ENCODE measurements at regions of chr16 and their contacts with region 1.

Region 1: GRCh38 chr16:86072328-86073102 is 173.6 kb downstream of the IRF8 start:
- DNase-seq: peak in 1 of 2 experiments; percentile 80
- H3K4me3 ChIP-seq: no peak overlapping the region
- H3K27ac ChIP-seq: no peak overlapping the region
- H3K4me1 ChIP-seq: peaks cover 2 to 15% (median 5%) of the 10 kb centered on the region in 4 experiments; a peak in 6 of 7 replicates
- H3K27me3 ChIP-seq: peaks cover 0 to 2% (median 0%) of the 10 kb centered on the region in 4 experiments; a peak in 2 of 7 replicates
- CTCF ChIP-seq: peak; percentile 69 to 79 (median 70)
- EP300 ChIP-seq: no peak
- POLR2A ChIP-seq: no peak
- RAD21 ChIP-seq: peak; percentile 79 to 83

Region 2: DNA sequence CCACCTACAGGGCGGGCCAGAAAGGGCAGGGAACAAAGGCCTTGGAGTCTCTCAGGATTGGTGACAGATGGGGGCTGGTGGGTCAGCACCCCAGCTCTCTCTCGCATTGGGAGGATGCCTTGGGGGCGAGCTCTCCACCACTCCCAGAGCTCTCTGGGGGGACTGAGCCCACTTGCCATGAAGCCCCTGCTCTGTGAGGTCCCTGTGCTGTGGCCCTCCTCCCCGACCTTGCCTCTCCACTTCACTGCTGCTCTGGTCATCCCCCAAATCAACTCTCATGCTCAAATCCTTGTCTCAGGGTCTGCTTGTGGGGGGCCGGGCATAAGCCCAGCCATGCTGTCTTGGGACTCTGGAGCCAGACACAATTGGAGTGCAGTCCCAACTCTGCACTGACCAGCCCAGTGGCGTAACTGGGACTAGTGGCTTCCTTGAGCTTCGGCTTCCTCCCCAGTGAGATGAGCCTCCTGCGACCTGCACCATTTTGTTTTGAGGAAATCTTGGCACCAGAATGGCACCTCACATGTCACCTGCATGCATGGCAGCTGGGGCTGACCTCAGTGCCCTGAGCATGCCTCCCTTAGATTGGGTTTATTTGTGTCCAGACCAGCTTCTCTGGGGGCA is 11.0 kb after region 1 on chr16:
- CTCF ChIA-PET with region 1: interaction called, 11 read pairs
- POLR2A ChIA-PET with region 1: interaction called, 3 read pairs
- DNase-seq: no peak
- H3K4me3 ChIP-seq: no peak overlapping the region
- H3K27ac ChIP-seq: no peak overlapping the region
- H3K4me1 ChIP-seq: peaks cover 0 to 4% (median 0%) of the 10 kb centered on the region in 4 experiments; a peak in 3 of 7 replicates
- H3K27me3 ChIP-seq: no peaks in the 10 kb centered on the region
- CTCF ChIP-seq: no peak
- EP300 ChIP-seq: no peak
- POLR2A ChIP-seq: no peak
- RAD21 ChIP-seq: no peak

Region 3: DNA sequence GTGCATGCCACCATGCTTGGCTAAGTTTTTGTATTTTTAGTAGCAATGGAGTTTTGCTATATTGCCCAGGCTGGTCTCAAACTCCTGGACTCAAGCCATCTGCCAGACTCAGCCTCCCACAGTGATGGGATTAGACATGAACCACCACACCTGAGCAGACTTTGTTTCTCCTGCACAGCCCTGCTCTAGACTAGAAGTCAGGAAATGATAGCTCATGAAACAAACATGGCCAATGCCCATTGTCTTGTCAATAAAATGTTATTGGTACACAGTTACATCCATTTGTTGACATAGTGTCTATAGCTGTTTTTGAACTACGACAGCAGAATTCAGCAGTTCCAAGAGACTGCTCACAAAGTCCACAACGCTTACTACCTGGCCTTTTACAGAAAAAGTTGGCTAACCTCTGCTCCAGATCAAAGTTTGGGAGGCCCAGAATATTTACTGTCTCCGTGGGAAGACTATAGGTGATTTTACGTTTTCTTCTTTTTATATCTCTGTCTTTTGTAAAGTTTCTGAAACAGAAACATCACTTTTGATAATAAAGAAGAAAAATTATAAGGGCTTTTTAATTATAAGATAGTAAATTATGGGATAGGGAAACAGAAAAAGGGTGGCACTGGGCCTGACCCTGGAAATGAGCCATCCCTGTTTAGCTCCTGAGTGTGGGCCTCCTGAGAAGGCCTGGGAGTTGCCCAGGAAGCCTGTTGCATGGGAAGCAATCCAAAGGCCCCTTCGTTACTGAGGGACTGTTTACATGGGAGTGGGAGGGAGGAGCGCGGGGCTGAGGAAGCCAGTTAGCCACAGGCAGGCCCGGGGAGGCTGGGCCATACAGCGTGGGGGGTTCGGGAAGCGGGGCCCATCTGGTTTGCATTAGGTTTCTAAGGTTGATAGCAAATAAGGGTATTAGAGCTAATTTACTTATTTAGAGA is 28.0 kb after region 1 on chr16:
- CTCF ChIA-PET with region 1: interaction called, 12 read pairs
- POLR2A ChIA-PET with region 1: interaction called, 3 read pairs
- DNase-seq: no peak
- H3K4me3 ChIP-seq: no peak overlapping the region
- H3K27ac ChIP-seq: no peak overlapping the region
- H3K4me1 ChIP-seq: no peaks in the 10 kb centered on the region
- H3K27me3 ChIP-seq: no peaks in the 10 kb centered on the region
- CTCF ChIP-seq: no peak
- EP300 ChIP-seq: no peak
- POLR2A ChIP-seq: no peak
- RAD21 ChIP-seq: no peak

Region 4: DNA sequence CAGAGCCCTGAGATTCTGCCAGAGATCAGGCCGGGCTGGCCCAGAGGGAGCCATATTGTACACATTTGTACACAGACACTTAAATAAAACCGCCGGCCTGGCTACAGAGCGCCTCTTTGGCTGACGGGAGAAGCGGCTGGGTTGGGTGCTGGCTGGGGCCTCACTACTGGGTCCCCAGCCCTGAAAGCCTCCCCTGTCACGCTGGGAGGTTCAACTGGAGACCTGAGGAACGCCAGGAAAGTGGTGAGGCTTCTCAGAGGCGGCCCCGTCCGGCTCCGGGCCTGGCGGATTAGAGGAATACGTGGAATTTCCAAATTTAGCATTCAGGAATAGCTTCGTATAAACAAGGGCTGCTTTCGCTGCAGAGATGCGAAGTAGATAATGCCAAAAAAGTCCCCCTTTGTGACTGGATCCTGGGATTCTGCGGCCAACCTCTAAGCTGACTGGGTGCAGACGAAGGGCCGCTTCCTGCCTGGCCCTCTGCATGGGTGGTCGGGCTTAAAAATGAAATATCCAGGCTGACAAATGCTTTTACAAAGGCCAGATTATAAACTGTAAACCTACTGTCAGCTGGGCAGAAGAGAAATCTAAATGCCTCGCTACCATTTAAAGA is 78.8 kb after region 1 on chr16:
- CTCF ChIA-PET with region 1: no interaction called
- POLR2A ChIA-PET with region 1: no interaction called
- DNase-seq: no peak
- H3K4me3 ChIP-seq: no peak overlapping the region
- H3K27ac ChIP-seq: no peak overlapping the region
- H3K4me1 ChIP-seq: no peaks in the 10 kb centered on the region
- H3K27me3 ChIP-seq: no peaks in the 10 kb centered on the region; a peak in 1 of 7 replicates
- CTCF ChIP-seq: no peak
- EP300 ChIP-seq: no peak
- POLR2A ChIP-seq: no peak
- RAD21 ChIP-seq: no peak

Measured in H1 (cell line).